ENCODE measurements at regions of chr3 and their contacts with region 1.

Region 1: GRCh38 chr3:71064288-71064955 is 519.1 kb downstream of the FOXP1 start:
- DNase-seq: peak; percentile 79 to 86 (median 83)
- H3K4me3 ChIP-seq: peak overlapping the region; percentile 73 to 90
- H3K4me3 Mint-ChIP-seq: no peak overlapping the region
- H3K27ac ChIP-seq: peak overlapping the region; percentile 90
- H3K27ac Mint-ChIP-seq: no peak overlapping the region
- H3K4me1 ChIP-seq: peaks cover 73% of the 10 kb centered on the region
- H3K4me1 Mint-ChIP-seq: peaks cover 37 to 67% (median 56%) of the 10 kb centered on the region in 4 donors
- H3K27me3 ChIP-seq: no peaks in the 10 kb centered on the region
- H3K27me3 Mint-ChIP-seq: no peaks in the 10 kb centered on the region

Region 2: DNA sequence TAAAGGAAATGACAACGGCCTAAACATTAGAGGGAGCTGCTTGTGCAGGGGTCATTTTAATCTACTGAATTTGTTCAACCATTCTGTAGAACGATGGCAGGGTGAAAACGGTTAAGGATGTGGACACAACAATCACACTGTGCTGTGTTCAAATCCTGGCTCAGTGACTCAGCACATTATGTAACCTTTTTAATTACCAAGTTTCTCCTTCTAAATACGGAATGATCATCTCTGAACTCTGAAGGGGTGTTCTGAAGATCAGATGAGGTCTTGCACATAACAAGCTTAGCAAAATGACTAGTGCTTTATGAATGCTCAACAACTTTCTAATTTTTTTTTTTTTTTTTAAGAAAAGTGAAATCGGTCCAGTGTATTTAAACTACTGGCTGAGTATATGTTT is 73.7 kb before region 1 on chr3:
- CTCF ChIA-PET with region 1: interaction called, 5 read pairs
- POLR2A ChIA-PET with region 1: interaction called, 11 read pairs
- intact Hi-C with region 1: no loop called
- DNase-seq: no peak
- H3K4me3 ChIP-seq: no peak overlapping the region
- H3K4me3 Mint-ChIP-seq: peak overlapping the region in 6 of 8 donors; percentile 36 to 85 (median 59)
- H3K27ac ChIP-seq: no peak overlapping the region
- H3K27ac Mint-ChIP-seq: peak overlapping the region in 6 of 7 donors; percentile 68 to 94 (median 76)
- H3K4me1 ChIP-seq: peaks cover 42% of the 10 kb centered on the region
- H3K4me1 Mint-ChIP-seq: peaks cover 42 to 82% (median 57%) of the 10 kb centered on the region in 4 donors
- H3K27me3 ChIP-seq: no peaks in the 10 kb centered on the region
- H3K27me3 Mint-ChIP-seq: no peaks in the 10 kb centered on the region

Region 3: GRCh38 chr3:71039332-71039731 is 25.1 kb before region 1 on chr3:
- CTCF ChIA-PET with region 1: interaction called, 5 read pairs
- POLR2A ChIA-PET with region 1: interaction called, 6 read pairs
- intact Hi-C with region 1: loop called (anchors 1 kb)
- DNase-seq: peak in 4 of 5 donors; percentile 38 to 57 (median 50)
- H3K4me3 ChIP-seq: no peak overlapping the region
- H3K4me3 Mint-ChIP-seq: peak overlapping the region; percentile 0 to 75 (median 56)
- H3K27ac ChIP-seq: peak overlapping the region; percentile 4
- H3K27ac Mint-ChIP-seq: peak overlapping the region; percentile 12 to 88 (median 70)
- H3K4me1 ChIP-seq: peaks cover 66% of the 10 kb centered on the region
- H3K4me1 Mint-ChIP-seq: peaks cover 56 to 89% (median 70%) of the 10 kb centered on the region in 4 donors
- H3K27me3 ChIP-seq: no peaks in the 10 kb centered on the region
- H3K27me3 Mint-ChIP-seq: no peaks in the 10 kb centered on the region

Region 4: GRCh38 chr3:71087143-71088018 is 23.0 kb after region 1 on chr3:
- CTCF ChIA-PET with region 1: interaction called, 18 read pairs
- POLR2A ChIA-PET with region 1: interaction called, 41 read pairs
- intact Hi-C with region 1: loop called (anchors 1 kb)
- DNase-seq: peak; percentile 83 to 93 (median 90)
- H3K4me3 ChIP-seq: peak overlapping the region in 1 of 2 donors; percentile 36
- H3K4me3 Mint-ChIP-seq: peak overlapping the region; percentile 65 to 91 (median 77)
- H3K27ac ChIP-seq: peak overlapping the region; percentile 59
- H3K27ac Mint-ChIP-seq: peak overlapping the region; percentile 88 to 98 (median 96)
- H3K4me1 ChIP-seq: peaks cover 89% of the 10 kb centered on the region
- H3K4me1 Mint-ChIP-seq: peaks cover 64 to 87% (median 77%) of the 10 kb centered on the region in 4 donors
- H3K27me3 ChIP-seq: no peaks in the 10 kb centered on the region
- H3K27me3 Mint-ChIP-seq: no peaks in the 10 kb centered on the region

Region 5: DNA sequence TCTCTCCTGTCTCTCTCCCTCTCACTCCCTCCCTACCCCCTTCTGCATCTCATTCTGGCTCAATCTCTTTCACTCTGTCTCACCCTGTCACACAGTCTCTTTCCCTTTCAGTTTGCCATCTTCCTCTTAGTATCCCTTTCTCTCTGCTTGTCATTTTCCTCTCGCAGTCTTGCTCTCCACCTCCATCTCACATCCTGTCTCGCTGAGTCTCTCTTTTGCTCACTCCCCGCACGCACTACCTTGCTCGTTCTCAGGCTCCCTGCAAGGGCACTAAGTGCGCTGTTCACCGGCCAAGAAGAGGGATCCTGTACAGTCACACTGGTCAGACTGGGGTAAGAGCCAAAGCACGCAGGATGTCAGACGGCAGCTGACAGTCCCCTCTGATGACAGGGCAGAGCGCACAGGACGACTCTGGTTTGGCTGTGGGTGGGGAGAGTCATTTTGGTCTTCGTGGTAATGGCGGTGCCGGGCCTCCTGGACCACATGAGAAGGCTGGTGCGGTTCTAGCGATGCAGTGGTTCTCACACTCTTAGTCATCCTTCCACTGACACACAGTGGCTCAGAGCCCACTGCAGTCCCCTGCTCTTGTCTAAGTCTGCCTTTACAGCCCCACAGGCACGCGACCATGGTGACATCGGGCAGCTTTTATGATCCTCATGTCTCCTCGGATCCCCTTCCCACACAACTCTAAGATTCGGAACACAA is 162.3 kb after region 1 on chr3:
- CTCF ChIA-PET with region 1: no interaction called
- POLR2A ChIA-PET with region 1: interaction called, 4 read pairs
- intact Hi-C with region 1: loop called (anchors 2 kb)
- DNase-seq: peak; percentile 64 to 88 (median 70)
- H3K4me3 ChIP-seq: peak overlapping the region; percentile 13 to 67
- H3K4me3 Mint-ChIP-seq: peak overlapping the region; percentile 79 to 93 (median 84)
- H3K27ac ChIP-seq: peak overlapping the region; percentile 40
- H3K27ac Mint-ChIP-seq: peak overlapping the region; percentile 83 to 95 (median 92)
- H3K4me1 ChIP-seq: peaks cover 41% of the 10 kb centered on the region
- H3K4me1 Mint-ChIP-seq: peaks cover 39 to 65% (median 53%) of the 10 kb centered on the region in 4 donors
- H3K27me3 ChIP-seq: no peaks in the 10 kb centered on the region
- H3K27me3 Mint-ChIP-seq: no peaks in the 10 kb centered on the region

Region 6: DNA sequence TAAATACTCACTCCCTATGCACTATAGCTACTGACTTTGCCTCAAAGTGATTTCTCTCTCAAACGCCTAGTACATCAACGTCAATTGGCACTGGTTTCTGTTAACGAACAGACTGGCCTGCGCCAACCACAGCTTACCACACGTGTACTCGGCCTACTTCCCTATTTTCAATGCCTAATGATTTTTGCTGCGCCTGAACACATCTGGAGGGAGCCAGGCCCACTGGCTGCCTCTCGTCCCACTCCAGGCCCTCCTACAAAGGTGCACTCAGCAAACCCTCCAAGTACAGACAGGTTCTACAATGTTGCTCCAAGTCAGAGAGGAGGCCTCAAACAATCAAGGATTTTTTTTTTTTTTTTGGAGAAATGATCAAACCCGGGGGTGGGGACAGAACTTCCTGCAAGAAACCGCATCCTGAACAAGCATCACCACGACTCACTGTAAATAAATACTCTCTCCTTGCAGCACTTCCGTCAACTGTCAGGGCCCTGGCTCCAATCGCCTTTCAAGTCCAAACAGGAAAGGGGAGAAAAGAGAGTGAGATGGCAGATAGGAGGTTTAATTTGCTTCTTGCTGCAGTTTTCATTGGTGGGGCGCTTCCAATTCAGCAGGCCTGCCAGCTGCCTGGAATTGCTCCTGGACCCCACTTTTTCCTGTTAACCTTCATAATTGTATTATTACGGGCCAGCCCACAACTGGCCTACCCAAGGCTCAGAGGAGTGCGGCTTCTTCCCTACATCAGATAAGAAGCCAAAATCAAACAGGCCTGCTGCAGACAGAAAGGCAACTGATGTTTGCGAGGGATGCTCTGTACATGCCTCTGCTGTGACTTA is 379.8 kb after region 1 on chr3:
- CTCF ChIA-PET with region 1: no interaction called
- POLR2A ChIA-PET with region 1: interaction called, 12 read pairs
- intact Hi-C with region 1: loop called (anchors 1 kb)
- DNase-seq: peak; percentile 89 to 95 (median 93)
- H3K4me3 ChIP-seq: peak overlapping the region; percentile 37 to 42
- H3K4me3 Mint-ChIP-seq: peak overlapping the region; percentile 27 to 92 (median 83)
- H3K27ac ChIP-seq: peak overlapping the region; percentile 67
- H3K27ac Mint-ChIP-seq: peak overlapping the region; percentile 96 to 100 (median 98)
- H3K4me1 ChIP-seq: peaks cover 100% of the 10 kb centered on the region
- H3K4me1 Mint-ChIP-seq: peaks cover 76 to 100% (median 91%) of the 10 kb centered on the region in 4 donors
- H3K27me3 ChIP-seq: no peaks in the 10 kb centered on the region
- H3K27me3 Mint-ChIP-seq: no peaks in the 10 kb centered on the region

Region 7: DNA sequence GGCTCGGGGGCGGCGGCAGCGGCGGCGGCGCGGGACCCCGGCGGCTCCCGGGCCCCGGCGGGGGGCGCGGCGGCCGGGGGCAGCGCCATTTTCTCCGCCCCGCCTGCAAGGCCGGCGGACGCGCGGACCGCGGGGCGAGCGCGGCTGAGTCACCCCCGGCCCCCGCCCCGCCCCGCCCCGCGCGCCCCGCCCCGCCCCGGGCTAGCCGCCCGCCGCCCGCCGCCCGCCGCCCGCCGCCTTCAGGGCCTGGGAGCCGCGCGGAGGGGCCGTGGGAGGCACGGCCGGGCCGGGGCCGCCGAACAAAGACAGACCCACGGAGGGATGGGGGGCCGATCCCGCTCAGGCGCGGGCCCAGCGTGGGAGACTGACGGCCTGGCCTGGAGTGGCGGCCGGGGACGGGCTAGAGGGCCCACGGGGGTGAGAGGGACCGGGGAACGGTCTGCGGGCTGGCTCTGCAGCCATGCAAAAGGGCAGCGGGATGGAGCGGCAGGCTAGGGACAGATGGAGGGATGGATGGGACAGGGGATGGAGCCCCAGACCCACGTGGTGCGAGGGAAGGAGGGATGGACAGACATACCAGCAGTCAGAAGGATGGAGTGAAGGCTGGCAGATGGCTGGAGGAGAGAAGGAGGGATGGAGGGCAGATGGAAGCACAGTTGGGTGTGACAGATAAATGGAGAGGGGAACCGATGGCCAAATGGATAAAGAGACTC is 661.0 kb after region 1 on chr3 and contains the start of gene EIF4E3:
- CTCF ChIA-PET with region 1: no interaction called
- POLR2A ChIA-PET with region 1: interaction called, 3 read pairs
- intact Hi-C with region 1: loop called (anchors 5 kb)
- DNase-seq: peak in 4 of 5 donors; percentile 36 to 47 (median 45)
- H3K4me3 ChIP-seq: peak within 1 kb of the TSS; percentile 85 to 95
- H3K4me3 Mint-ChIP-seq: peak within 1 kb of the TSS; percentile 94 to 98 (median 97)
- H3K27ac ChIP-seq: peak within 1 kb of the TSS; percentile 77
- H3K27ac Mint-ChIP-seq: peak within 1 kb of the TSS; percentile 92 to 99 (median 97)
- H3K4me1 ChIP-seq: peaks cover 81% of the 10 kb centered on the region
- H3K4me1 Mint-ChIP-seq: peaks cover 56 to 79% (median 69%) of the 10 kb centered on the region in 4 donors
- H3K27me3 ChIP-seq: no peaks in the 10 kb centered on the region
- H3K27me3 Mint-ChIP-seq: no peaks in the 10 kb centered on the region
- total RNA-seq, gene EIF4E3: 51.5 to 58.7 TPM